ENCODE measurements at regions of chr19 and their contacts with region 1.

Region 1: DNA sequence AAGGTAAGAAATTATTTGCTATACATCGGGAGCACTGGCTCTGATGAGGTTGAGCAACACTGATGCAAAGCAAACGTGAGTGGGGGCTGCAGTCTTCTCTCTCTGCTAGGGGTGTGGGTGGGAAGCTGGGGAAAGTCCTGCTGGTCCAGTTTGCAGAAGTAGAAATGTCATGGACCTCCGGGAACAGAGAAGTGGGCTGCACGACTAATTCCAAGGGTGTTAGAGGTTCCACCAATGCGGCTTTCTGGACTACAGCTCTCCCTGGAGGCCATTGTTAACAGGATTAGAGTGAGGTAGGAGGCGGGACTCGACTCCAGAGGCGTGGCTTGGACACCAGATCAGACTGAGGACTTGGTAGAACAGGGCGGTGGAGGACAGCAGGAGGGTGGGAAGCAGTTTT is 5.7 kb upstream of the FBXO27 start:
- DNase-seq: no peak
- ATAC-seq: peak; percentile 88
- H3K4me3 ChIP-seq: no peak overlapping the region
- H3K27ac ChIP-seq: no peak overlapping the region
- H3K4me1 ChIP-seq: no peaks in the 10 kb centered on the region
- H3K27me3 ChIP-seq: no peaks in the 10 kb centered on the region
- CTCF ChIP-seq: peak in 1 of 3 experiments; percentile 42; a peak in 2 of 6 replicates
- EP300 ChIP-seq: no peak
- POLR2A ChIP-seq: no peak
- RAD21 ChIP-seq: peak; percentile 62

Region 2: GRCh38 chr19:39052243-39052746 is 14.2 kb after region 1 on chr19:
- CTCF ChIA-PET with region 1: interaction called, 35 read pairs
- POLR2A ChIA-PET with region 1: interaction called, 3 read pairs
- RAD21 ChIA-PET with region 1: interaction called, 5 read pairs
- SMC1A ChIA-PET with region 1: interaction called, 4 read pairs
- in situ Hi-C with region 1: no loop called
- intact Hi-C with region 1: no loop called
- DNase-seq: no peak
- ATAC-seq: peak; percentile 97
- H3K4me3 ChIP-seq: no peak overlapping the region
- H3K27ac ChIP-seq: no peak overlapping the region
- H3K4me1 ChIP-seq: no peaks in the 10 kb centered on the region
- H3K27me3 ChIP-seq: no peaks in the 10 kb centered on the region; a peak in 1 of 4 replicates
- CTCF ChIP-seq: peak; percentile 59 to 93 (median 79)
- EP300 ChIP-seq: no peak
- POLR2A ChIP-seq: no peak
- RAD21 ChIP-seq: peak; percentile 53

Measured in GM12878 (cell line).